ENCODE measurements at regions of chr7 and their contacts with region 1.

Region 1: DNA sequence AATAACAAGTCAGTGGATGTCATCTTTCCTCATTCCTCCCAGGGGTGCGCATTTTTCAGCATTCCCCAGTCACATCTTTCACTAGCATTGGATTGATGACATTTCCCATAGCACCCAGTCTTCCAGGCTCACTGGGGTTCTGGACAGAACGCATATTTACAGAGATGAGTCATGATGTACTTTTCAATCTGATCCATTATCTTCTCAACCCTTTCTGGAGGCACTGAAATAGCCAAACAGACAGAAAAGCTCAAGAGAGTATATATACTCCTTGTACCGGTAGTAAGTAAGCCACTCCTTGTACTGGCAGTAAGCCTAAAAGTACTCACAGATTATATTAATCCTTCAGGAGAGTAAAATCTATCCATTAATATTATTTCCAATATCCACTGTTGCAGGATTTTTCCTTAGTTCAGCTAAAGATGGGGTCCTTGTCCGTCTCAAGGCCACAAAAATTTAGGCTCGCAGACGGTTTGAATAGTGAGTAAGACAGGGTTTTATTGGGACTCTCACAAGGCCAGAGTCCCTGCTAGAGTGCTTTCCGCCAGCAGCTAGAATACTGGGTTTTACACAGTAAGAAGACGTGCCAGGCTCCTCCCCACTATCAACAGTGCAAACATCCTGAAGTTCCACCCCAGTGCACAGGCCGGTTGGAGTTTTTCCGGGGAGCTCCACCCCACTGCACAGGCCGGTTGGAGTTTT is 60.8 kb downstream of the MDH2 start:
- DNase-seq: peak; percentile 90
- ATAC-seq: peak; percentile 91
- H3K4me3 ChIP-seq: peak overlapping the region; percentile 60
- H3K27ac ChIP-seq: peak overlapping the region; percentile 98
- H3K4me1 ChIP-seq: peaks cover 40% of the 10 kb centered on the region
- H3K27me3 ChIP-seq: no peaks in the 10 kb centered on the region
- CTCF ChIP-seq: no peak

Region 2: GRCh38 chr7:76020031-76020714 is 88.5 kb before region 1 on chr7:
- CTCF ChIA-PET with region 1: no interaction called
- POLR2A ChIA-PET with region 1: no interaction called
- intact Hi-C with region 1: no loop called
- DNase-seq: peak; percentile 71
- ATAC-seq: peak; percentile 74
- H3K4me3 ChIP-seq: no peak overlapping the region
- H3K27ac ChIP-seq: no peak overlapping the region
- H3K4me1 ChIP-seq: no peaks in the 10 kb centered on the region
- H3K27me3 ChIP-seq: no peaks in the 10 kb centered on the region
- CTCF ChIP-seq: peak; percentile 92

Region 3: GRCh38 chr7:76047811-76048667 is 60.7 kb before region 1 on chr7 and contains the starts of genes MDH2 and STYXL1:
- CTCF ChIA-PET with region 1: no interaction called
- POLR2A ChIA-PET with region 1: no interaction called
- intact Hi-C with region 1: no loop called
- DNase-seq: peak; percentile 97
- ATAC-seq: peak; percentile 95
- H3K4me3 ChIP-seq: peak within 1 kb of the TSS; percentile 92
- H3K27ac ChIP-seq: peak within 1 kb of the TSS; percentile 81
- H3K4me1 ChIP-seq: peaks cover 25% of the 10 kb centered on the region
- H3K27me3 ChIP-seq: no peaks in the 10 kb centered on the region
- CTCF ChIP-seq: no peak
- total RNA-seq, gene MDH2: 163 and 174 TPM in 2 replicates
- total RNA-seq, gene STYXL1: 57.4 and 61.3 TPM in 2 replicates

Region 4: DNA sequence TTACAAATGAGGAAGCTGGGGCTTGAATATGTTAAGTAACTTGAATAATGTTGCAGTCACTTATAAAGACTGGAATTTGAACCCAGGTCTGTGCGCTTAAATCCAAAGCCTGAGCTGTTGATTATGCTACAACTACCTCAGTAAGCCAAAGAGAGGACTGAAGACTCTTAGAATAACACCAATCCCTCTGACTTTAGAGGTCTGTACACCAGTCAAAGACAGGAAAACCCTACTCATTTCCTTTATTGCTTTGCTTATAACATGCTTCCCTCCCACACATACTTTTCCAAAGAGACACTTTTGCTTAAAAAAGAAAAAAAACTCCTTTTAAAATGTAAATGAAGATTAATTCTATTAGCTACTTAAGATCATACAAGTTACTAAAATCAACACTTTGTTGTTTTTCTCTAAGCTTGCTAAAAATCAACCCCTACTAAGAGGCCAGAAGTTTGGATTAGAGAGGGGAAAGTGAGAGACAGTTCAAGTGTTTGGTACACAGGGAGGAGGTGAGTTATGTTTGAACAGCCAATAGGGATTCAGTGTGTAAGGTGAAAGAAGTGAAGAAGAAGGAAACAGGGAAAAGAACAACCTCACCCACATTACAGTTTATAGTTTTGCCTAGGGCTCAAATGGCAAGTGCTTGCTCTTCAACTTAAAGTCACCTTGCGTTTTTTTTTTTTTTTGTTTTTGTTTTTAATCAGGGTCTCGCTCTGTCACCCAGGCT is 14.0 kb after region 1 on chr7:
- CTCF ChIA-PET with region 1: no interaction called
- POLR2A ChIA-PET with region 1: no interaction called
- intact Hi-C with region 1: loop called (anchors 1 kb)
- DNase-seq: no peak
- ATAC-seq: peak; percentile 23; the same call in 1 of the 2 replicates
- H3K4me3 ChIP-seq: no peak overlapping the region
- H3K27ac ChIP-seq: no peak overlapping the region
- H3K4me1 ChIP-seq: peaks cover 7% of the 10 kb centered on the region; the same call in 1 of the 2 replicates
- H3K27me3 ChIP-seq: no peaks in the 10 kb centered on the region
- CTCF ChIP-seq: no peak

Measured in PC-3 (cell line).